Heart left ventricle (tissue), 16 donors: ENCODE measurements at regions of chr17 and their contacts with region 1.

Region 1: GRCh38 chr17:46078675-46079074 is 79.6 kb downstream of the STH start:
- DNase-seq: no peak
- ATAC-seq: no peak
- H3K4me3 ChIP-seq: no peak overlapping the region
- H3K27ac ChIP-seq: no peak overlapping the region
- H3K4me1 ChIP-seq: peaks cover 0 to 44% (median 13%) of the 10 kb centered on the region in 12 donors
- H3K27me3 ChIP-seq: no peaks in the 10 kb centered on the region
- CTCF ChIP-seq: no peak
- POLR2A ChIP-seq: no peak

Region 2: GRCh38 chr17:46125831-46126230 is 47.2 kb after region 1 on chr17:
- intact Hi-C with region 1: loop called in 1 of 10 experiments (anchors 5 kb)
- DNase-seq: no peak
- ATAC-seq: no peak
- H3K4me3 ChIP-seq: no peak overlapping the region
- H3K27ac ChIP-seq: peak overlapping the region in 1 of 12 donors; percentile 42
- H3K4me1 ChIP-seq: peaks cover 21 to 96% (median 72%) of the 10 kb centered on the region in 12 donors
- H3K27me3 ChIP-seq: no peaks in the 10 kb centered on the region
- CTCF ChIP-seq: no peak
- POLR2A ChIP-seq: no peak